Activated B cell treated with CpG ODN at 0.5 μM for 24 hours (primary cell): ENCODE measurements at regions of chr19 and their contacts with region 1.

Region 1: DNA sequence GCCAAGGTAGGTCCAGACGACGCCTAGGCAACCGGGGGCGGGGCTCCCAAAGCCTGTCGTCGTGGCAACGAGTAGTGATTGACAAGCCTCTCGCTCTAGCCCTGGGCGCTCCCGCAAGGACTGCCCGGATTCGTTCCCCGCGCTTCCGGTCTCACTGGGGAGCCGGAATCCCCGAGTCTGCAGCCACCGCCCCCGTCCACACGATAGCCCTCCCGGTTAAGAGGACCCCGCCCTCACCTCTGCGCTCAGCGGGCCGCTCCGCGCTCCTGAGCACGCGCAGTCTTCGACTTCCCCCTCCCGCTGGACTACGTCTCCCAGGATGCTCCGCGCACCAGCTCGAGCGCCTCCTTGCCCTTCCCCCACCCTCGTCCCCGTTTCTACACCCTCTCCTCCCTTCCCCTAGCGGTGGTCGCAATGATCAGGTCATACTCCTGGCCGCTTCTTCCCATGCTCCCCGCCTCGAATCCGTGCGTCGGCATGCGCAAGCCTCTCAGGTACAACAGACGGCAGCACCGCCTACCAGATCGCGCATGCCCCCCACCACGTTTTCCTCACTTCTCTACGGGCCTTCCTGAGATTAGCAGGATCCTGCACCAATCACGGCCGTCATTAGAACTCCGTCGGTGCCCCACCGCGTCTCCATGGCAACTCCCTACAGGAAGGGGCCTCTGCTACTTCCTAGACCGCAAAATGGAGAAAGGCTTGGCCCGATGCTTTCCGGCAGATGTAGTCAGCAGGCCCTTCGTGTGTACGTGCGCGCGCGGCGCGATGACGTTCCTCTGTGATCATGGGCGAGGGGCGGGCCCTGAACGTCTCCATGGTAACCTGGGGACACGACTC is at the start of gene MZF1:
- DNase-seq: peak; percentile 100
- ATAC-seq: peak; percentile 61
- H3K4me3 Mint-ChIP-seq: peak within 1 kb of the TSS; percentile 97
- H3K27ac Mint-ChIP-seq: peak within 1 kb of the TSS; percentile 100
- H3K4me1 Mint-ChIP-seq: peaks cover 44% of the 10 kb centered on the region
- H3K27me3 Mint-ChIP-seq: no peaks in the 10 kb centered on the region
- CTCF ChIP-seq: no peak
- total RNA-seq, gene MZF1: 41.9 and 54.5 TPM in 2 replicates

Region 2: GRCh38 chr19:58326914-58327726 is 245.9 kb before region 1 on chr19 and contains the start of gene ZSCAN22:
- CTCF ChIA-PET with region 1: no interaction called
- POLR2A ChIA-PET with region 1: no interaction called
- intact Hi-C with region 1: no loop called
- DNase-seq: peak; percentile 82
- ATAC-seq: peak; percentile 88
- H3K4me3 Mint-ChIP-seq: no peak within 1 kb of the TSS
- H3K27ac Mint-ChIP-seq: no peak within 1 kb of the TSS
- H3K4me1 Mint-ChIP-seq: peaks cover 2% of the 10 kb centered on the region
- H3K27me3 Mint-ChIP-seq: no peaks in the 10 kb centered on the region
- CTCF ChIP-seq: no peak
- total RNA-seq, gene ZSCAN22: 4.7 and 4.8 TPM in 2 replicates

Region 3: DNA sequence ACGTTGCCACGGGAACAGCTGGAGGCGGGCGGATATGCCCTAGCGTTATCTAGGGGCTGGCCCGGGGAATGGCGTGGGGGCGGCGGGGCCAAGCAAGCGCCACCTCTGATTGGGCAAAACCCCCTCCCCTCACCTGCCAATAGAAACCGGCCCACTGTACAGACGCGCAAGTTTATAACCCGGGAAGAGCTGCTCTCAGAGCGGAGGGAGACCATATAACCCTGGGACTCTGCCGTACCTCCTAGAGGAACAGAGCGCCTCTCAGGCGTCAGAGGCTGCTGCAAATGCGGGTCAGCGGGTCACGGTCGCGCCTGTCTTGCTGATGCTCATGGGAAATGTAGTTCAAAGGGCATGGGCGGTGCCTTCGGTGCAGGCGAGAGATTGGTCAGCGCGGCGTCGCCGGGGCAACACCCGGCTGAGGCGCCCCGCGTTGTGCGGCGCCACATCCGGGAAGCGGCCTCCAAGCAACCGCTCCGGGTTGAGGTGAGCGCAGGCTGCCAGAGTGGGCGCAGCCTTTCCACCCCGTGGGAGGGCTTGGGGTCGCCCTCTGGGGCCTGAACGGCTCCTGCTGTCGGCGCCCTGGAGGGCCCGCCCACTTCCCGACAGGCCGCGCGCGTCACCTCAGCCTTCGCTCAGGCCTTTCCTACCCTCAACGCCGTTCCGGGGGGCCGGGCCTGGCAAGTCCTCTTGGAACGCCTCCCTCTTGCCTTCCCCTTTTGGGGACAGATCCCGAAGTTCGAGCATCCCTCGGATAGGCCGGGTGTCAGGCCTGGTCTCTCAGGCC is 97.1 kb before region 1 on chr19 and contains the start of gene ZNF446:
- CTCF ChIA-PET with region 1: no interaction called
- POLR2A ChIA-PET with region 1: interaction called, 5 read pairs
- intact Hi-C with region 1: loop called (anchors 1 kb)
- DNase-seq: peak; percentile 91
- ATAC-seq: peak; percentile 88
- H3K4me3 Mint-ChIP-seq: peak within 1 kb of the TSS; percentile 94
- H3K27ac Mint-ChIP-seq: peak within 1 kb of the TSS; percentile 95
- H3K4me1 Mint-ChIP-seq: peaks cover 20% of the 10 kb centered on the region
- H3K27me3 Mint-ChIP-seq: no peaks in the 10 kb centered on the region
- CTCF ChIP-seq: no peak
- total RNA-seq, gene ZNF446: 9.6 and 10.4 TPM in 2 replicates

Region 4: GRCh38 chr19:58531034-58531840 is 41.8 kb before region 1 on chr19:
- CTCF ChIA-PET with region 1: no interaction called
- POLR2A ChIA-PET with region 1: no interaction called
- intact Hi-C with region 1: no loop called
- DNase-seq: no peak
- ATAC-seq: peak; percentile 31
- H3K4me3 Mint-ChIP-seq: no peak overlapping the region
- H3K27ac Mint-ChIP-seq: no peak overlapping the region
- H3K4me1 Mint-ChIP-seq: peaks cover 25% of the 10 kb centered on the region
- H3K27me3 Mint-ChIP-seq: no peaks in the 10 kb centered on the region
- CTCF ChIP-seq: no peak

Region 5: GRCh38 chr19:58558623-58559274 is 14.3 kb before region 1 on chr19:
- CTCF ChIA-PET with region 1: interaction called, 3 read pairs
- POLR2A ChIA-PET with region 1: interaction called, 63 read pairs
- intact Hi-C with region 1: loop called (anchors 1 kb)
- DNase-seq: peak; percentile 97
- ATAC-seq: peak; percentile 72
- H3K4me3 Mint-ChIP-seq: peak overlapping the region; percentile 97
- H3K27ac Mint-ChIP-seq: peak overlapping the region; percentile 97
- H3K4me1 Mint-ChIP-seq: peaks cover 82% of the 10 kb centered on the region
- H3K27me3 Mint-ChIP-seq: no peaks in the 10 kb centered on the region
- CTCF ChIP-seq: no peak